Dorsolateral prefrontal cortex (tissue), 120 donors: ENCODE measurements at regions of chr4 and their contacts with region 1.

Region 1: DNA sequence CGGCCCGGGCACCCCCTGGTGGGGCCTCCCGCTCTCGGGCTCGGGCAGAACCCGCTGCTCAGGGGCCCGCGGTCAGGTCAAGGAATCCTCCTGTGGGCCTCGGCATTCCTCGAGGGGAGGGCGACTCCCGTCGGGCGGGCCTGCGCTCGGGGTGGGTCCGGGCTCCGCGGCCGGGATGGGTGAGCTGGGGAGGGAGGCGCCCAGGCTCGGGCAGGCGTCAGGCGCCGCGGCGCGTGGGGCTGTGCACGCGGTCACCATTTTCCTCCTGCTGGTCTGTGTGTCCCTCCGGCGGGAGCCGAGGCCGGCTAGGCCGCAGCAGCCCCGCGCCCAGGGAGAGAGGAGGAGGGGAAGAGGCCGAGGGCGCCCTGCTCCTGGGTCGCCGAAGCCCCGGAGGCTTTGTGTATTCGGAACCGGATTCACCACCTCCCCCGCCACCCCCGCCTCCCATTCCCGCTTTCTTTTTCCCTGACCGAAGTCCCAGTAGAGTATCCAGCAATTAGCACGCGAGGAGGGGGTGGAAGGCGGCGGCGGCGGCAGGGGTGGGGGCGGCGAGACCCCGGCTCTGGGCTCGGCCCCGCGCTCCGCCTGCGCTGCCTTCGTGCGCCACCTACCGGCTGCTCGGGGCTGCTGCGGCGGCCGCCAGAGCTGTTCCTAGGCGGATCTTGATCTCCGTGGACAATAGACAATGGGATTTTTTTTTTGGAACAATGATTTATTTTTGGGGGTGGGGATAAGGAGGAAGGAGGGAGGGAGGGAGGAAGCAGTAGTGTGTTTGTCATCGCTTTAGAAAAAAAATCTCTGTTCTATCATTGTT is 99.0 kb upstream of the MAML3 start:
- DNase-seq: peak; percentile 75 to 85 (median 78)
- H3K4me3 ChIP-seq: peak overlapping the region; percentile 53 to 95 (median 74)
- H3K27ac ChIP-seq: peak overlapping the region; percentile 74 to 98 (median 95)
- H3K27me3 ChIP-seq: no peaks in the 10 kb centered on the region
- CTCF ChIP-seq: peak; percentile 74 to 98 (median 92)

Region 2: DNA sequence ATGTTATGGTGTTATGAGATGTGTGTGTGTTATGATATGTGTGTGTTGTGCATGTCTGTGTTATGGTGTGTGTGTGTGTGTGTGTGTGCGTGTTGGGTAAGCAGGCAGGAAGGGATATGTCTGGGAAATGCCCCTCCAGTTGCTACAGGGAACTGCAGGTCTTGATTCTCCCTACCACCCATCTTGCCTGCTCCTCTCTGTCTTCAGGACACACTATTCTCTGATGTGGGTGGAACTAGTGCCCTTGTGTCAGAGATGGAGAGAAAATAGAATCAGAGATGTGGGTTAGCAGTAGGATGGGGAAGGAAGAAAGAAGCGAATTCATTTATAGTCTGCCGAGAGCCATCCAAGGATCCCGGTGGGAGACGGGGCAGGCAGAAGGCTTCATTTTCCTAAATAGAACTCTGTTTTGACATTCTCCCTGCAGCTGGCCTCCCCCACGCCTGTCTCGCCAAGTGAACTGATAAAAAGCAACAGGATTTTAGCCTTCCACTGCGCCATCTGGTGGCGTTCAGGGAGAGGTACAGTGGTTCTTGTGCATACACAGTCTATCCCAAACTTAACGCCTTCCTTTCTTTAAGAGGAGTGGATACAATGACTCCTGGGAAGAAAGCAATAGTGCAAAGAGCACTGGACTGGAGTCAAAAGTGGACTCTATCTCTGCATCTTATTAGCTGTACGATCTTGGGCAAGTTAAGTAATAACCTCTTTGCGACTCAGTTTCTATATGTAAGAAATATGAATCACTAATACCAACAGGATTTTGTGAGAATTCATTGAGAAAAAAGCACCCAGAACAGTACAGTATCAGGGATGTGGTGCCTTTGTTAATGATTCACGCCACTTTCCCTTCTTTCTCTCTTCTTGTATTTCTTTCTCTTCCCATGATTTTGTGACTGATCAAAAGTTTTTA is 601.4 kb before region 1 on chr4:
- intact Hi-C with region 1: loop called (anchors 5 to 10 kb)
- DNase-seq: peak; percentile 74 to 88 (median 82)
- H3K4me3 ChIP-seq: peak overlapping the region in 37 of 59 donors; percentile 15 to 54 (median 41)
- H3K27ac ChIP-seq: peak overlapping the region in 38 of 59 donors; percentile 5 to 79 (median 58)
- H3K27me3 ChIP-seq: no peaks in the 10 kb centered on the region
- CTCF ChIP-seq: peak; percentile 84 to 99 (median 95)

Region 3: GRCh38 chr4:139734875-139735380 is 518.0 kb before region 1 on chr4:
- intact Hi-C with region 1: loop called (anchors 2 kb)
- DNase-seq: peak; percentile 78 to 96 (median 88)
- H3K4me3 ChIP-seq: peak overlapping the region; percentile 44 to 81 (median 64)
- H3K27ac ChIP-seq: peak overlapping the region in 58 of 59 donors; percentile 13 to 92 (median 86)
- H3K27me3 ChIP-seq: no peaks in the 10 kb centered on the region
- CTCF ChIP-seq: peak; percentile 41 to 95 (median 87)

Region 4: DNA sequence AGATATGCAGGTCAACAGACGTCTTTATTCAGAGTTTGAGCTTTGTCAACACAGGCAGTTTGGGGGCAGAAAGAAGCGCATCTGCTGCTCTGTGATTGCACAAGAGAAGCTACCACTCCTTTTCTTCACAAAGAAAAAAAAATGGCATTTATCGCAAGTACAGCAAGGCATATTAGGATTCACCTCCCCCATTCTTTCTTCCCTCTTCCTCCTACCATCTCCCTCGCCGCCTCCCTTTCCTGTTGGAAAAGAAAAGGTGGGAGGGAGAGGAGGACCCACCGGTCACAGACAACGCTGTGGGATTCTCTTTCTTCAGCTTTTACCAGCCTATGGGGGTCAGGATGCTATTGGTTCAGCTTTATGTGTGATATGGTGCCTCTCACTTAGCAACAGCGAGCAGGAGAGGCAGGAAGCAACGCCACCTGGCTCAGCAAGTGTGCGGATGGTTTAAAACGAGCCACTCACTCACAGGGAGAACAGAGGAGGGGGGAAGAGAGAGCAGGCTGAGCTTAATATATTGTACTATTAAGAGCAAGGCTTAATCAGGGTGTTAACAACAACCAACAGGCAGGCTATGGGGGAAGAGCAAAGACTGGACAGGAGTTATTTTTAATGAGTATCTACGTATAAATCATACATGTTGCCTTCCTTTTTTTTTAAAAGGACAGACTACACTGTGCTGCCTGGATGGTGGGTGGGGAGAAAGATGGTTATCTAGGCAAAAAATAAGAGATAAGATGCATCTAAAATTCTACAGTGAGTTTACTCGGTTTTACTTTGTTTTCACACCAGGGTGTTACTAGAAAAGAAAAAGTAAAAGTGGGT is 203.7 kb before region 1 on chr4:
- intact Hi-C with region 1: loop called in 1 of 2 experiments (anchors 5 kb)
- DNase-seq: peak in 9 of 10 donors; percentile 22 to 79 (median 58)
- H3K4me3 ChIP-seq: peak overlapping the region; percentile 8 to 68 (median 49)
- H3K27ac ChIP-seq: peak overlapping the region in 39 of 59 donors; percentile 0 to 78 (median 51)
- H3K27me3 ChIP-seq: no peaks in the 10 kb centered on the region
- CTCF ChIP-seq: peak in 33 of 56 donors; percentile 7 to 48 (median 24)

Region 5: GRCh38 chr4:140153718-140154571 is 99.0 kb before region 1 on chr4 and contains the start of gene MAML3:
- intact Hi-C with region 1: loop called (anchors 1 to 2 kb)
- DNase-seq: peak; percentile 86 to 95 (median 91)
- H3K4me3 ChIP-seq: peak within 1 kb of the TSS; percentile 52 to 92 (median 79)
- H3K27ac ChIP-seq: peak within 1 kb of the TSS; percentile 68 to 97 (median 92)
- H3K27me3 ChIP-seq: peaks cover 0 to 5% (median 0%) of the 10 kb centered on the region in 45 donors
- CTCF ChIP-seq: peak in 27 of 56 donors; percentile 6 to 53 (median 17)
- total RNA-seq, gene MAML3: 2.5 to 9.3 (median 4.8) TPM

Region 6: GRCh38 chr4:140308366-140309123 is 55.6 kb after region 1 on chr4:
- intact Hi-C with region 1: loop called in 1 of 2 experiments (anchors 5 kb)
- DNase-seq: peak in 8 of 10 donors; percentile 51 to 88 (median 76)
- H3K4me3 ChIP-seq: peak overlapping the region in 3 of 59 donors; percentile 2 to 24 (median 3)
- H3K27ac ChIP-seq: peak overlapping the region in 47 of 59 donors; percentile 2 to 82 (median 53)
- H3K27me3 ChIP-seq: no peaks in the 10 kb centered on the region
- CTCF ChIP-seq: no peak

Region 7: GRCh38 chr4:140408974-140409373 is 156.0 kb after region 1 on chr4:
- intact Hi-C with region 1: no loop called
- DNase-seq: no peak
- H3K4me3 ChIP-seq: no peak overlapping the region
- H3K27ac ChIP-seq: no peak overlapping the region
- H3K27me3 ChIP-seq: no peaks in the 10 kb centered on the region
- CTCF ChIP-seq: no peak